ENCODE measurements at regions of chr14 and their contacts with region 1.

Region 1: GRCh38 chr14:106228541-106229158 is 702.3 kb downstream of the TMEM121 start:
- DNase-seq: peak in 7 of 9 donors; percentile 71 to 83 (median 79)
- ATAC-seq: peak; percentile 95
- H3K4me3 ChIP-seq: peak overlapping the region; percentile 55
- H3K4me3 Mint-ChIP-seq: peak overlapping the region; percentile 65 to 96 (median 88)
- H3K27ac ChIP-seq: peak overlapping the region; percentile 72
- H3K27ac Mint-ChIP-seq: peak overlapping the region; percentile 74 to 98 (median 94)
- H3K4me1 ChIP-seq: peaks cover 0 to 45% of the 10 kb centered on the region in 2 donors
- H3K4me1 Mint-ChIP-seq: peaks cover 31 to 93% (median 85%) of the 10 kb centered on the region in 7 donors
- H3K27me3 ChIP-seq: no peaks in the 10 kb centered on the region
- H3K27me3 Mint-ChIP-seq: no peaks in the 10 kb centered on the region

Region 2: GRCh38 chr14:106200541-106201315 is 27.9 kb before region 1 on chr14:
- CTCF ChIA-PET with region 1: interaction called, 18 read pairs
- POLR2A ChIA-PET with region 1: interaction called, 8 read pairs
- intact Hi-C with region 1: no loop called
- DNase-seq: peak in 5 of 9 donors; percentile 25 to 55 (median 45)
- ATAC-seq: peak; percentile 65
- H3K4me3 ChIP-seq: peak overlapping the region; percentile 22
- H3K4me3 Mint-ChIP-seq: peak overlapping the region; percentile 53 to 88 (median 79)
- H3K27ac ChIP-seq: no peak overlapping the region
- H3K27ac Mint-ChIP-seq: peak overlapping the region in 6 of 9 donors; percentile 12 to 83 (median 46)
- H3K4me1 ChIP-seq: no peaks in the 10 kb centered on the region
- H3K4me1 Mint-ChIP-seq: peaks cover 10 to 25% (median 22%) of the 10 kb centered on the region in 7 donors
- H3K27me3 ChIP-seq: no peaks in the 10 kb centered on the region
- H3K27me3 Mint-ChIP-seq: peaks cover 0 to 65% (median 20%) of the 10 kb centered on the region in 5 donors

Region 3: GRCh38 chr14:106766145-106766544 is 537.5 kb after region 1 on chr14:
- CTCF ChIA-PET with region 1: no interaction called
- POLR2A ChIA-PET with region 1: no interaction called
- intact Hi-C with region 1: loop called in 1 of 2 experiments (anchors 10 kb)
- DNase-seq: no peak
- ATAC-seq: no peak
- H3K4me3 ChIP-seq: no peak overlapping the region
- H3K4me3 Mint-ChIP-seq: peak overlapping the region in 7 of 10 donors; percentile 9 to 84 (median 68)
- H3K27ac ChIP-seq: no peak overlapping the region
- H3K27ac Mint-ChIP-seq: peak overlapping the region in 6 of 9 donors; percentile 17 to 94 (median 88)
- H3K4me1 ChIP-seq: peaks cover 7 to 23% of the 10 kb centered on the region in 2 donors
- H3K4me1 Mint-ChIP-seq: peaks cover 17 to 58% (median 43%) of the 10 kb centered on the region in 7 donors
- H3K27me3 ChIP-seq: no peaks in the 10 kb centered on the region
- H3K27me3 Mint-ChIP-seq: no peaks in the 10 kb centered on the region